ENCODE measurements at regions of chr6 and their contacts with region 1.

Region 1: DNA sequence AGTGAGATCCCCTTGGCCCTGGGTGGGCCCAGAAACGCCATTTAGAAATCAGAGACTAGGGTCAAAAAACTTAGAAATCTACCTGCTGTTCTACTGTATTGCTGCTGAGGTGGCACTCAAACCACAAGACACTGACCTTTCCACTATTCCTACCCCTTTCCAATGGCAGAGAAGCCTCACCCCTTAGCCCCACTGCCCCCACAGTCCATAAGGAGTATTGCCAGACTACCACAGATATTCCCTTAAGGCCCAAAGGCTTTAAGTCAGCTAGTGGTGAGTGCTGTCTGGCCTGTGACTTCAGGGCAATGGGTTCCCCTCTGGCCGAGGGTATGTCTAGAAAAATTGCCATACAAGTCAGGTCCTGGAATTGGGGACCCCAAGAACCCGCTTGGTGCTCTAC is 656.1 kb downstream of the COL12A1 start:
- DNase-seq: peak; percentile 13
- ATAC-seq: peak; percentile 99
- H3K4me3 ChIP-seq: no peak overlapping the region
- H3K27ac ChIP-seq: no peak overlapping the region
- H3K4me1 ChIP-seq: no peaks in the 10 kb centered on the region
- H3K27me3 ChIP-seq: no peaks in the 10 kb centered on the region
- CTCF ChIP-seq: peak; percentile 25; the same call in 1 of the 2 replicates
- EP300 ChIP-seq: no peak
- POLR2A ChIP-seq: no peak
- RAD21 ChIP-seq: no peak

Region 2: DNA sequence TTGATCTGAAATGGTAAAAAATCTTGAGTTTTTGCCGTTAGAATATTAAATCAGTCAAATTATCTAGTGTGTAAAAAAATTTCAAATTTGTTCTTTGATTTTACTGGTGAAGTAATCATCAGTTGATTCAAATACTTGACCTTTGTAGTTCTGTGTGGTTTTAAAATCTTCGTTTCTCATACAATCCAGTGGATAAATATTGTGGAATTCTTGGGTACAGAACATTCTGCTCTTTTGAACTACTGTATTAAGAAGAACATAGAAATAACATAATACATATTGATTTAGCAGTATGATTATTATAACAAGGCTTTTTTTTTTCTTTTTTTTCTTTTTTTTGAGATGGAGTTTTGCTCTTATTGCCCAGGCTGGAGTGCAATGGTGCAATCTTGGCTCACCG is 361.9 kb before region 1 on chr6:
- CTCF ChIA-PET with region 1: no interaction called
- POLR2A ChIA-PET with region 1: no interaction called
- in situ Hi-C with region 1: no loop called
- intact Hi-C with region 1: no loop called
- DNase-seq: no peak
- ATAC-seq: no peak
- H3K4me3 ChIP-seq: no peak overlapping the region
- H3K27ac ChIP-seq: no peak overlapping the region
- H3K4me1 ChIP-seq: 0 out of 2 replicates have a peak, but pooled peaks cover 7% of the 10 kb centered on the region
- H3K27me3 ChIP-seq: no peaks in the 10 kb centered on the region
- CTCF ChIP-seq: no peak
- EP300 ChIP-seq: no peak
- POLR2A ChIP-seq: no peak
- RAD21 ChIP-seq: no peak

Region 3: GRCh38 chr6:74409447-74409846 is 140.3 kb before region 1 on chr6:
- CTCF ChIA-PET with region 1: no interaction called
- POLR2A ChIA-PET with region 1: no interaction called
- in situ Hi-C with region 1: no loop called
- intact Hi-C with region 1: loop called (anchors 1 kb)
- DNase-seq: peak; percentile 36
- ATAC-seq: peak; percentile 78
- H3K4me3 ChIP-seq: no peak overlapping the region
- H3K27ac ChIP-seq: no peak overlapping the region
- H3K4me1 ChIP-seq: no peaks in the 10 kb centered on the region
- H3K27me3 ChIP-seq: no peaks in the 10 kb centered on the region
- CTCF ChIP-seq: peak; percentile 64
- EP300 ChIP-seq: no peak
- POLR2A ChIP-seq: no peak
- RAD21 ChIP-seq: peak; percentile 61; the same call in 1 of the 2 replicates